Activated CD4-positive, alpha-beta memory T cell treated with anti-CD3 and anti-CD28 coated beads for 36 hours (primary cell): ENCODE measurements at regions of chr12 and their contacts with region 1.

Region 1: GRCh38 chr12:42325653-42326474 is at the starts of genes PPHLN1 and ZCRB1:
- DNase-seq: peak; percentile 86
- H3K4me3 Mint-ChIP-seq: peak within 1 kb of the TSS; percentile 91
- H3K27ac Mint-ChIP-seq: peak within 1 kb of the TSS; percentile 91
- H3K4me1 Mint-ChIP-seq: peaks cover 39% of the 10 kb centered on the region
- H3K27me3 Mint-ChIP-seq: no peaks in the 10 kb centered on the region
- total RNA-seq, gene PPHLN1: 79.9 to 81.3 TPM
- total RNA-seq, gene ZCRB1: 80.1 to 88.1 TPM

Region 2: DNA sequence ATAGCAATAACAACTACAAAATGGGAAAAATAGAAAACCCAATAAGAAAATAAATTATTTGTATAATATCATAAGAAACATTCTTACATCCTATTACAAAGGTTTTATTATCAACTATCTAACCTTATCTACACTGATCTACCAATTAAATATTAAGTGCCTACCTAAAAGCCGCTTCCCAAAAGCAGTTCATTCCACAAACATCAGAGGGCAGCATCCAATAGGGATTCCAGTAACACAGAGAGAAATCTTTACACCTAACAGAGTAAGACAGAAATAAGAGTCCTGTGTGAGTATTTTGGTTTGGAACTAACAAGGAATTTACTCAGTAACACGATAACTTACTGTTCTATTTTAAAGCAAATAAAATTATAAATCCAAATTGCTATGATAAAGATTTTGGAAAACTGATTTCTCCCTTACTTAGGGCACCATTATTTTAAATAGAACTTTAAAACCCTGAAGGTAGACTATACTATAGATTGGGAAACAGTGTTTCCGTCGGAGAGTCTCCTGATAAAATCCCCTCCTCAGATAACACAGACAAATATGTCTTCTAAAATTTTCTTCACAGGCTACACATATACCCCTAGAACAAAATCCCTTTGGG is 196.2 kb before region 1 on chr12:
- CTCF ChIA-PET with region 1: interaction called, 3 read pairs
- POLR2A ChIA-PET with region 1: no interaction called
- intact Hi-C with region 1: loop called (anchors 2 kb)
- DNase-seq: no peak
- H3K4me3 Mint-ChIP-seq: no peak overlapping the region
- H3K27ac Mint-ChIP-seq: no peak overlapping the region
- H3K4me1 Mint-ChIP-seq: peaks cover 30% of the 10 kb centered on the region
- H3K27me3 Mint-ChIP-seq: no peaks in the 10 kb centered on the region

Region 3: GRCh38 chr12:42221726-42222125 is 104.1 kb before region 1 on chr12:
- CTCF ChIA-PET with region 1: no interaction called
- POLR2A ChIA-PET with region 1: no interaction called
- intact Hi-C with region 1: no loop called
- DNase-seq: no peak
- H3K4me3 Mint-ChIP-seq: no peak overlapping the region
- H3K27ac Mint-ChIP-seq: no peak overlapping the region
- H3K4me1 Mint-ChIP-seq: peaks cover 39% of the 10 kb centered on the region
- H3K27me3 Mint-ChIP-seq: no peaks in the 10 kb centered on the region

Region 4: DNA sequence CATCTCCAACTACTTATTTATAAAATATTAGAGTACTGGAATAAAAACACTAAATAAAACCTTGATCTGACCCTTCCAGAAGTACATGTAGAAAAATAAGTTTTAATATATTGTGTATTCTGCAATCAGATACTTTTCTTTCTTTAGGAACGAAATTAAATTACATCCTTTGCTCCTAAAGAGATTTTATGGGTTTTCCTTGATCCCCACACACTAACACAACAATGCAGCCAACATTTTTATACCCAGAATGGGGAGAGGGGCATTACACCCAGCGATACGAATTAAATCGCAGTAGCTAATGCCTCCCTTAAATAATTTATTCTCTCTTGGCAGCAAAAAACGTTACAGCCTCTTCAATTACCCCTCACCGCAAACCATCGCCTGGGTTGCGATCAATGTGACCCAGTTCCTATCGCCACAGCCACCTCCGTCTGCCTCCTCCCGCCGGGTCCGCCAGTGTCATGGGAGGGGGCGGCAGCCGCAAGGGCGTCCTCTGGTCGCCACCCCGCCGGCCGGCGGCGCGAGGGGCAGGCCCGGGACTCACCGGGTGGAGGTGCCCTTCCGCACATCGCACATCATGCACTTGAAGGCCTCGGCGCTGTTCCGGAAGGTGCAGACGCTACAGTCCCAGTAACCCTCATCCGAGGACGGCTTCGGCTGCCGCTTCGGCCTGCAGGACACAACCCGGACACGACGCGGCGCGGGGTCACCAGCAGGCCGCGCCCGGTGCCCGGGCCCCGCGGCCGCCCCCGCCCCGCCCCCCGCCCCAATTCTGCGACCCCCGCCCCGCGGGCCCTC is 88.6 kb before region 1 on chr12:
- CTCF ChIA-PET with region 1: interaction called, 8 read pairs
- POLR2A ChIA-PET with region 1: no interaction called
- intact Hi-C with region 1: loop called (anchors 1 kb)
- DNase-seq: peak; percentile 84
- H3K4me3 Mint-ChIP-seq: peak overlapping the region; percentile 87
- H3K27ac Mint-ChIP-seq: peak overlapping the region; percentile 56
- H3K4me1 Mint-ChIP-seq: peaks cover 34% of the 10 kb centered on the region
- H3K27me3 Mint-ChIP-seq: no peaks in the 10 kb centered on the region

Region 5: GRCh38 chr12:42346403-42347002 is 20.6 kb after region 1 on chr12:
- CTCF ChIA-PET with region 1: no interaction called
- POLR2A ChIA-PET with region 1: interaction called, 3 read pairs
- intact Hi-C with region 1: loop called (anchors 2 kb)
- DNase-seq: no peak
- H3K4me3 Mint-ChIP-seq: no peak overlapping the region
- H3K27ac Mint-ChIP-seq: no peak overlapping the region
- H3K4me1 Mint-ChIP-seq: peaks cover 28% of the 10 kb centered on the region
- H3K27me3 Mint-ChIP-seq: no peaks in the 10 kb centered on the region

Region 6: DNA sequence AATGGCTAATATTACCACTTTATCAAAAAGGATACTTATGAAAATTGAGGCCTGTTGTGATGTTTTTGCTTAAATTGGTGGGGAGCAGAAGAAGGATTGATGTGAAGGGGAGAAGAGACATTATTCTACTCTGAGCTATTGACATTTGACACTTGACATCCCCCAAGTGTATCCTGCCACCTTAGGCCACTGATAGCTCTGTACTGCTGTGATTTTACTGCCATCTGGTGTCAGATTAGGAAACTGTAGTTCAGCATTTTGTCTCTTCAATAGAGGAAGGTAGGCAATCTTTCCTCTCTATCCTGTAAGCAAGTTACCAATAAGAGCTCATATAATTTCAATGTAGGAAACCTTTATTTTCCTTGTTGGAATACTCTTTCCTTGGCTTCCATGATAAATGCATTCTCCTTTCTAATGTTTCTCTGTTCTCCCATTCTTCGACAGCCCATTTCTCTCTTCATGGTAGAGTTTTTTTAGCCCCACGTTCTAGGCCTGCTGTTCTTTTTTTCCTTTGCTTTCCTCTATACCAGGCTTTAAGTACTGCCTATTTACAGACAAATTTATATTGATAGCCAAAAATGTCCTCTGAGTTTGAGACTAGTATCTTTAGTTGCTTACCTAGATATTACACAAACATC is 46.4 kb after region 1 on chr12:
- CTCF ChIA-PET with region 1: interaction called, 5 read pairs
- POLR2A ChIA-PET with region 1: no interaction called
- intact Hi-C with region 1: loop called (anchors 2 kb)
- DNase-seq: no peak
- H3K4me3 Mint-ChIP-seq: no peak overlapping the region
- H3K27ac Mint-ChIP-seq: no peak overlapping the region
- H3K4me1 Mint-ChIP-seq: peaks cover 7% of the 10 kb centered on the region
- H3K27me3 Mint-ChIP-seq: no peaks in the 10 kb centered on the region